ENCODE measurements at regions of chr16 and their contacts with region 1.

Region 1: GRCh38 chr16:50925758-50926357 is 184.0 kb downstream of the CYLD start:
- DNase-seq: no peak
- H3K4me3 ChIP-seq: no peak overlapping the region
- H3K27ac ChIP-seq: no peak overlapping the region
- H3K4me1 ChIP-seq: no peaks in the 10 kb centered on the region
- H3K27me3 ChIP-seq: no peaks in the 10 kb centered on the region
- CTCF ChIP-seq: no peak
- EP300 ChIP-seq: no peak
- POLR2A ChIP-seq: no peak

Region 2: DNA sequence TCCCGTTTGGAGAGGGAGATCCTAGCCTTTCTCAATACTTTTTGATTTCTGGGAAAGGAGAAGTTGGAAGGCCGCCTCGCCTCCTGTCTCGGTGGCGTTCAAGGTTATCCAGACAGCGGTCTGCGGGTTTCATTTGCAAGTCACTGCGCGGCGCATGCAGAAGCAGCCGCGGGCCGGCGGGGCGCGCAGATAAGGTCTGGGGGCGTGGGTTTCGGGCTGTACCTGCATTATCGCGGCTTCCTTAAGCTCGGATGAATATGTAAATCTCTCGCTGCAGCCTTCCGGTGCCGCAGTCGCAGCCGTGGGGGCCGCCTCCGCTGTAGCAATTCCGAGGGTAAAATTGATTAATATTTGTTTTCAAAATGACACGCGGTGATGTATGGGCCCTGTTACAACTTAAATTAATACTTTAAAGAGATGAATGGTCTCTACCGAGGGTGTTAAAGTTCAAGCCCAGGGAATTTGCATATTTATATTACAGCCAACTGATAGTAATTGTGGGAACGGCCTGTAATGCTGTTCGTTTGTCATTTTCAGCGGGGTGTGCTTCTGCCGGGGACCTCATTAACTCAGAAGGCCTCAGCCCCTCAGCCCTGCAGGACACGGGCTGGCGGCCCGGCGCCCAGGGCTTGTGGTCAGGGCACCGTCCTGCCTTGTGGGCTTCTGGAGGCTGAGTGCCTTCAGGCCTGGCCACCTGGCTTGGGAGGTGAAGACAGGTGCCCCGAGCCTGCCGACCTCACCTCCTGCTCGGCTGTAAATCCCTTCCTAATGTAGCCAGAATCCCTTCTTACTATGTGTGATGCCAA is 84.6 kb before region 1 on chr16:
- in situ Hi-C with region 1: loop called in 1 of 4 experiments (anchors 25 kb)
- intact Hi-C with region 1: no loop called
- DNase-seq: no peak
- H3K4me3 ChIP-seq: peak overlapping the region in 2 of 4 donors; percentile 15 to 29
- H3K27ac ChIP-seq: no peak overlapping the region
- H3K4me1 ChIP-seq: peaks cover 0 to 3% (median 2%) of the 10 kb centered on the region in 4 donors
- H3K27me3 ChIP-seq: peaks cover 17% of the 10 kb centered on the region
- CTCF ChIP-seq: no peak
- EP300 ChIP-seq: no peak
- POLR2A ChIP-seq: no peak